Mammary epithelial cell (primary cell): ENCODE measurements at regions of chr12 and their contacts with region 1.

Region 1: DNA sequence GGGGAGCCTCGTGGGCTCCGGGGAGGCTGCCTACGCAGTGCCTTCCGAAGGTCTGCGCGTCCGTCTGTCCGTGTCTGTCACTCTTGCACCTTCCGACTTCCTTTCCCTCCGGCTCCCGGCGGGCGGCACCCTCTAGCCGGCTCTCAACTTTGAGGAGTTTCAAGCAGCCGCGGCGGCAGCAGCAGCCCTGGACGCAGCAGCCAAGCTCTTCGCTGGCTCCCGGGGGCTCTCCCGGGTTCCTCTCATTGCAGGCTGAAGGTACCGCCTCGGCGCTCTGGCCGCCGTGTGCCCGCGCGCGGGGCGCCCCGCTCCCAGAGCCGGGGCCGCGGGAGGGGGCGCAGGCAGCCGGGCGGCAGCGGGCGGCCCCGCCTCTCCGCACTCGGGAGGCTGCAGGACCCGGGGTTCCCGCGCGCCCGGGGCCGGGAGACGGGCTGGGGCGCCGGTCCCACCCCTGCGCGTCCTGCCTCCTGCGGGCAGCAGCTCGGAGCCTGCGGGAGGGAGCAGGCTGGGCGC is at the starts of genes AMIGO2 and PCED1B:
- DNase-seq: peak; percentile 67
- H3K4me3 ChIP-seq: peak within 1 kb of the TSS; percentile 72 to 85 (median 78)
- H3K27ac ChIP-seq: peak within 1 kb of the TSS; percentile 94
- H3K4me1 ChIP-seq: peaks cover 46% of the 10 kb centered on the region
- H3K27me3 ChIP-seq: no peaks in the 10 kb centered on the region
- CTCF ChIP-seq: peak; percentile 19 to 69
- total RNA-seq, gene AMIGO2: 96.1 to 241 TPM
- total RNA-seq, gene PCED1B: 2.3 to 10.3 TPM

Region 2: GRCh38 chr12:46677749-46678148 is 401.8 kb before region 1 on chr12:
- CTCF ChIA-PET with region 1: no interaction called
- dilution Hi-C with region 1: no loop called
- in situ Hi-C with region 1: no loop called
- intact Hi-C with region 1: no loop called
- DNase-seq: peak; percentile 61
- H3K4me3 ChIP-seq: no peak overlapping the region
- H3K27ac ChIP-seq: peak overlapping the region; percentile 94
- H3K4me1 ChIP-seq: peaks cover 64% of the 10 kb centered on the region
- H3K27me3 ChIP-seq: no peaks in the 10 kb centered on the region
- CTCF ChIP-seq: peak; percentile 33 to 63

Region 3: DNA sequence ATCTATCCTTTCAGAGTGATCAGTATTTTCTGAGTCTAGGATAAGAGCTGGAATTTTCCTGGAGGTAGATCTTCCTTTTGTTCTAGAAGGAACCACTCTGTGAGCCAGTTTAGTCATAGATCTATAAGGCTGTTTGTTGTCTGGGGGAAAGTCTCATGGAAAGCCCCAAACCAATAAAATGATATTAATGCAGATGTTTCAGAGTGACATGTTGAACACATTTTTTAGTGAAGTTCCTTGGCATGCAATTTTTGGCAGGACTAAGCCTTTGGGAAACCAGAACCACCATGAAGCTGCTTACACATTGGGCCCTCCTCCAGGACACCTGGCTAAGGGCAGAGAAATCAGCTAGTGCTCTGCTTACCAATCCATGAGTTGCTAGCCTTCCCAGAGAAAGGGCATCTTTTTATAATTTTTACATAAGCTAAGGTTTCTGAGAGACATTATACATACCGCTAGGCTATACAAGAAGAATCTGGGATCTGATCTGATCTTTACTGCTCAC is 101.6 kb before region 1 on chr12:
- CTCF ChIA-PET with region 1: no interaction called
- dilution Hi-C with region 1: no loop called
- in situ Hi-C with region 1: no loop called
- intact Hi-C with region 1: no loop called
- DNase-seq: no peak
- H3K4me3 ChIP-seq: no peak overlapping the region
- H3K27ac ChIP-seq: no peak overlapping the region
- H3K4me1 ChIP-seq: peaks cover 7% of the 10 kb centered on the region
- H3K27me3 ChIP-seq: no peaks in the 10 kb centered on the region
- CTCF ChIP-seq: no peak

Region 4: GRCh38 chr12:47121146-47121545 is 41.6 kb after region 1 on chr12:
- CTCF ChIA-PET with region 1: no interaction called
- dilution Hi-C with region 1: no loop called
- in situ Hi-C with region 1: no loop called
- intact Hi-C with region 1: loop called (anchors 2 kb)
- DNase-seq: peak; percentile 74
- H3K4me3 ChIP-seq: peak overlapping the region in 1 of 3 experiments; percentile 3
- H3K27ac ChIP-seq: peak overlapping the region; percentile 41
- H3K4me1 ChIP-seq: peaks cover 16% of the 10 kb centered on the region
- H3K27me3 ChIP-seq: no peaks in the 10 kb centered on the region
- CTCF ChIP-seq: no peak

Region 5: GRCh38 chr12:47190271-47190750 is 110.8 kb after region 1 on chr12:
- CTCF ChIA-PET with region 1: no interaction called
- dilution Hi-C with region 1: no loop called
- in situ Hi-C with region 1: loop called in 1 of 2 experiments (anchors 10 kb)
- intact Hi-C with region 1: loop called (anchors 5 kb)
- DNase-seq: peak; percentile 80
- H3K4me3 ChIP-seq: no peak overlapping the region
- H3K27ac ChIP-seq: no peak overlapping the region
- H3K4me1 ChIP-seq: peaks cover 21% of the 10 kb centered on the region
- H3K27me3 ChIP-seq: no peaks in the 10 kb centered on the region
- CTCF ChIP-seq: no peak

Region 6: GRCh38 chr12:47216150-47216677 is 136.7 kb after region 1 on chr12:
- CTCF ChIA-PET with region 1: no interaction called
- dilution Hi-C with region 1: no loop called
- in situ Hi-C with region 1: no loop called
- intact Hi-C with region 1: loop called (anchors 10 kb)
- DNase-seq: no peak
- H3K4me3 ChIP-seq: no peak overlapping the region
- H3K27ac ChIP-seq: no peak overlapping the region
- H3K4me1 ChIP-seq: peaks cover 53% of the 10 kb centered on the region
- H3K27me3 ChIP-seq: no peaks in the 10 kb centered on the region
- CTCF ChIP-seq: no peak

Region 7: GRCh38 chr12:47270782-47271664 is 191.5 kb after region 1 on chr12:
- CTCF ChIA-PET with region 1: interaction called, 9 read pairs
- dilution Hi-C with region 1: no loop called
- in situ Hi-C with region 1: loop called in 1 of 2 experiments (anchors 25 kb)
- intact Hi-C with region 1: loop called (anchors 1 kb)
- DNase-seq: peak; percentile 97
- H3K4me3 ChIP-seq: no peak overlapping the region
- H3K27ac ChIP-seq: peak overlapping the region; percentile 99
- H3K4me1 ChIP-seq: peaks cover 68% of the 10 kb centered on the region
- H3K27me3 ChIP-seq: no peaks in the 10 kb centered on the region
- CTCF ChIP-seq: no peak

Region 8: GRCh38 chr12:47276621-47277309 is 197.2 kb after region 1 on chr12:
- CTCF ChIA-PET with region 1: interaction called, 9 read pairs
- dilution Hi-C with region 1: no loop called
- in situ Hi-C with region 1: loop called in 1 of 2 experiments (anchors 25 kb)
- intact Hi-C with region 1: loop called (anchors 1 kb)
- DNase-seq: peak; percentile 91
- H3K4me3 ChIP-seq: no peak overlapping the region
- H3K27ac ChIP-seq: peak overlapping the region; percentile 96
- H3K4me1 ChIP-seq: peaks cover 72% of the 10 kb centered on the region
- H3K27me3 ChIP-seq: no peaks in the 10 kb centered on the region
- CTCF ChIP-seq: no peak

Region 9: DNA sequence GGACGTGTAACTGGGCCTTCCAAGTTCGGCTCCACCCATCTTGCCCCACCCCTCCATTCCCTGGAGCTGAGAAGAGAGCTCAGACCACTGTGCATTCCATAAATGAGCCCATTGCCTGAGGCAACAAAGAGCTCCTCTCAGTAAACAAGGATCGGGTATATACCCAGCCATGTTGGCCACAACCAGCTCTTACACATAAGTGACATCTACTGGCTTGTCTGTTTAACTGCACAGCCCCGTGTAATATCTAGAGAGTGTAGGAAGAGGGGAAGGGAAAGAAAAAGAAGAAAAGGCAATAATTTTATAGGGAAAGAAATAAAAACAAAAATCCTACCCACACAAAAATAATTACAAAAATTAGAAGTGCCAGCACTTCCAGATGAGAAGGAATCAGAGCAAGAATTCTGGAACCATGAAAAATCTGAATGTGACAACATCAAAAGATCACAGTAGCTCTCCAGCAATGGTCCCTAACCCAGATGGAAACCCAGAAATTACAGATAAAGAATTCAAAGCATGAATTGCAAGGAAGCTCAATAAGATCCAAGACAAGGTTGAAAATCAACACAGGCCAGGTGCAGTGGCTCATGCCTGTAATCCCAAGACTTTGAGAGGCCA is 318.2 kb after region 1 on chr12:
- CTCF ChIA-PET with region 1: interaction called, 3 read pairs
- dilution Hi-C with region 1: no loop called
- in situ Hi-C with region 1: loop called in 1 of 2 experiments (anchors 5 kb)
- intact Hi-C with region 1: loop called (anchors 1 kb)
- DNase-seq: peak; percentile 74
- H3K4me3 ChIP-seq: no peak overlapping the region
- H3K27ac ChIP-seq: no peak overlapping the region
- H3K4me1 ChIP-seq: peaks cover 17% of the 10 kb centered on the region
- H3K27me3 ChIP-seq: no peaks in the 10 kb centered on the region
- CTCF ChIP-seq: peak; percentile 77 to 83

Region 10: GRCh38 chr12:47419497-47419896 is 340.0 kb after region 1 on chr12:
- CTCF ChIA-PET with region 1: no interaction called
- dilution Hi-C with region 1: no loop called
- in situ Hi-C with region 1: no loop called
- intact Hi-C with region 1: no loop called
- DNase-seq: peak; percentile 32
- H3K4me3 ChIP-seq: no peak overlapping the region
- H3K27ac ChIP-seq: no peak overlapping the region
- H3K4me1 ChIP-seq: peaks cover 7% of the 10 kb centered on the region
- H3K27me3 ChIP-seq: no peaks in the 10 kb centered on the region
- CTCF ChIP-seq: no peak